Activated CD4-positive, alpha-beta T cell treated with anti-CD3 and anti-CD28 coated beads for 36 hours (primary cell): ENCODE measurements at regions of chr13 and their contacts with region 1.

Region 1: GRCh38 chr13:23966691-23967615 is 69.7 kb upstream of the C1QTNF9B start:
- DNase-seq: peak; percentile 6
- ATAC-seq: peak; percentile 79
- H3K4me3 Mint-ChIP-seq: peak overlapping the region; percentile 63
- H3K27ac Mint-ChIP-seq: peak overlapping the region; percentile 79
- H3K4me1 Mint-ChIP-seq: peaks cover 37% of the 10 kb centered on the region
- H3K27me3 Mint-ChIP-seq: no peaks in the 10 kb centered on the region

Region 2: GRCh38 chr13:23570099-23570920 is 396.6 kb before region 1 on chr13 and contains the start of gene TNFRSF19:
- CTCF ChIA-PET with region 1: no interaction called
- POLR2A ChIA-PET with region 1: no interaction called
- intact Hi-C with region 1: no loop called
- DNase-seq: no peak
- ATAC-seq: no peak
- H3K4me3 Mint-ChIP-seq: no peak within 1 kb of the TSS
- H3K27ac Mint-ChIP-seq: no peak within 1 kb of the TSS
- H3K4me1 Mint-ChIP-seq: peaks cover 14% of the 10 kb centered on the region
- H3K27me3 Mint-ChIP-seq: peaks cover 34% of the 10 kb centered on the region
- total RNA-seq, gene TNFRSF19: not detected

Region 3: DNA sequence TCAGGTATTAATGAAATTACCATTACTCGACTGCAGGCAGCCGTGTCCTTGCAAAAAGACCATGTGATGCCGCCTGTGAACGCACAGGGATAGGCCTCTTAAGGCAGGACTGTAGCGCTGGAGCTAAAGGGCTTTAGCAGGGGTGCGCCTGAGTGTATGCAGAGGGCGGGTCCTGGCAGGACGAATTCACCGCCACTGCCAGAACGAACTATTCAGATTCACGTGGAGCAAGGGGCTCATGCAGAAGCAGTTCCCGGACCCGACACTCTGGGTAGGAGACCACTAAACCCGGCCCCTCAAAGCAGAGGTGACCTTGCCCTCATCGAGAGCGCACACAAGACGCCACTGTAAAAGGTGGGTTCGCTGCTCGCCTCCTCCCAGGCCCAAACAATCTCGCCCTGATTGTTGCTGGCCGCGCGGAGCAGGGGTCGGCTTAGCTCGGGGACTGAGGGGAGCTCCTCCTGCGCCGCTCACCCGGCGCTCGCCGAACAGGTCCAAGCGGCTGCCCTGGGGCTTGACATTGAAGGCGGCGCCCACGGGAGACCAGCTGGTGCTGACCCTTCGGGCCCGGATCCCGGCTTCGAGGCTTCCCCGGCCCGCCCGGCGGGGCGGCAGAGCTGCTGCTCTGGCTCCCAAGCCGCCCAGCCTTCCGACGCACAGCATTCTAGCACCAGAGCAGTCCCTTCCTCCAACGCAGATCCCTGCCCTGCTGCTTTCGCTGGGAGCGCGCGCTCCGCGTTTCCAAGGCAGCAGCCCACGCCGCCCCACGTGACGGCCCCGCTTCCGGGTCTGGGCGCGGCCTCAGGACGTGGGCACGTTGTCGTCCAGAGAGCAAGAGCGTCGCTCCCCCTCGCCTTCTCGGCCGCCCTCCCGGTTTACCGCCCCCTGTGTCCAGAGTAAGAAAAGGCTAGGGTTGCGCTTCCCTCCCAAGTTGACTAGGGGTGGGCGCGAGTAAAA is 78.0 kb before region 1 on chr13 and contains the start of gene MIPEP:
- CTCF ChIA-PET with region 1: no interaction called
- POLR2A ChIA-PET with region 1: no interaction called
- intact Hi-C with region 1: loop called in 1 of 2 experiments (anchors 2 kb)
- DNase-seq: peak; percentile 94
- ATAC-seq: peak; percentile 90
- H3K4me3 Mint-ChIP-seq: peak within 1 kb of the TSS; percentile 79
- H3K27ac Mint-ChIP-seq: peak within 1 kb of the TSS; percentile 75
- H3K4me1 Mint-ChIP-seq: peaks cover 23% of the 10 kb centered on the region
- H3K27me3 Mint-ChIP-seq: no peaks in the 10 kb centered on the region
- total RNA-seq, gene MIPEP: 13.2 to 15.5 TPM

Region 4: GRCh38 chr13:23921451-23921888 is 45.5 kb before region 1 on chr13:
- CTCF ChIA-PET with region 1: interaction called, 6 read pairs
- POLR2A ChIA-PET with region 1: no interaction called
- intact Hi-C with region 1: loop called (anchors 2 to 5 kb)
- DNase-seq: no peak
- ATAC-seq: peak; percentile 36
- H3K4me3 Mint-ChIP-seq: no peak overlapping the region
- H3K27ac Mint-ChIP-seq: no peak overlapping the region
- H3K4me1 Mint-ChIP-seq: no peaks in the 10 kb centered on the region
- H3K27me3 Mint-ChIP-seq: peaks cover 23% of the 10 kb centered on the region

Region 5: DNA sequence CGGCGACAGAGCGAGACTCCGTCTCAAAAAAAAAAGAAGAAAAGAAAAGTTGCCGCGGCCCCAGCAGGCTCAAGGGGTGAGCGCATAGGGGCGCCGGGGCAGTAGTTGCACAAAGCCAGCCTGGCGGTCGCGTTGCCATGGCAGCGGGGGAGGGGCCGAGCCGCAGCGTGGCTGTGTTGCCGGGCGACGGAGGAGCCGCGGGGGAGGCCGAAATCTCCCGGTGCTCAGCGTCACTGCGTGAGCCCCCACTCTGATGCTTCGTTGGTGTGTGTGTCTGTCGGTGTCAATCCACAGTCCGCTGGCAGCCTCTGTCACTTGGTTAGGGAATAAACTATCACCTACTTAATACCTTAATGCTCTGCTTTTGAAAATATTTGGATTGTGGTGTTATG is 13.2 kb after region 1 on chr13:
- CTCF ChIA-PET with region 1: interaction called, 3 read pairs
- POLR2A ChIA-PET with region 1: no interaction called
- intact Hi-C with region 1: loop called in 1 of 2 experiments (anchors 1 kb)
- DNase-seq: peak; percentile 91
- ATAC-seq: peak; percentile 87
- H3K4me3 Mint-ChIP-seq: peak overlapping the region; percentile 65
- H3K27ac Mint-ChIP-seq: no peak overlapping the region
- H3K4me1 Mint-ChIP-seq: peaks cover 10% of the 10 kb centered on the region
- H3K27me3 Mint-ChIP-seq: peaks cover 16% of the 10 kb centered on the region

Region 6: GRCh38 chr13:24038405-24038804 is 71.5 kb after region 1 on chr13:
- CTCF ChIA-PET with region 1: no interaction called
- POLR2A ChIA-PET with region 1: no interaction called
- intact Hi-C with region 1: no loop called
- DNase-seq: peak; percentile 35
- ATAC-seq: no peak
- H3K4me3 Mint-ChIP-seq: no peak overlapping the region
- H3K27ac Mint-ChIP-seq: no peak overlapping the region
- H3K4me1 Mint-ChIP-seq: peaks cover 2% of the 10 kb centered on the region
- H3K27me3 Mint-ChIP-seq: peaks cover 2% of the 10 kb centered on the region

Region 7: DNA sequence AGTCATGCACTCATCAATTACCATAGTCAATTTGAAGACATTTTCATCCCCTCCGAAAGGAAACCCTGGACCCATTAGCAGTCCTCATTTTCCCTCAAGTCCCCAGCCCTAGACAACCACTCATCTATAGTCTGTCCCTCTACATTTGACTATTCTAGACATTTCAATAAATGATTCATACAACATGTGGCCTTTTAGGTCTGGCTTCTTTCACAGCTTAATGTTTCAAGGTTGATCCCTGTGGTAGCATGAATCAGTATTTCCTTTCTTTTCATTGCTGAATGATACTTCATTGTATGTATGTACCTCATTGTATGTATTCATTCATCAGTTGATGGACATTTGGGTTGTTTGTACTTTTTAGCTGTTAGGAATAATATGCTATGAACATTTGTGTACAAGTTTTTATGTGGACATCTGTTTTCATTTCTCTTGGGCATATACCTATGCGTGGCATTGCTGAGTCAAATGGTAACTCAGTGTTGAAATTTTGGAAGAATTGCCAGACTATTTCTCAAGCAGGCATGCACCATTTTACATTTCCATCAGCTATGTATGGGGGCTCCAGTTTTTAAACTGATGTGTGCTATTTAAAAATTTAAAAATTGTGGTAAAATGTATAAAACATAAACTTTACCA is 212.0 kb after region 1 on chr13:
- CTCF ChIA-PET with region 1: no interaction called
- POLR2A ChIA-PET with region 1: no interaction called
- intact Hi-C with region 1: loop called in 1 of 2 experiments (anchors 5 kb)
- DNase-seq: no peak
- ATAC-seq: peak; percentile 92
- H3K4me3 Mint-ChIP-seq: no peak overlapping the region
- H3K27ac Mint-ChIP-seq: peak overlapping the region; percentile 8
- H3K4me1 Mint-ChIP-seq: peaks cover 31% of the 10 kb centered on the region
- H3K27me3 Mint-ChIP-seq: no peaks in the 10 kb centered on the region

Region 8: GRCh38 chr13:24220086-24220703 is 253.2 kb after region 1 on chr13:
- CTCF ChIA-PET with region 1: no interaction called
- POLR2A ChIA-PET with region 1: no interaction called
- intact Hi-C with region 1: loop called in 1 of 2 experiments (anchors 2 kb)
- DNase-seq: peak; percentile 69
- ATAC-seq: peak; percentile 98
- H3K4me3 Mint-ChIP-seq: no peak overlapping the region
- H3K27ac Mint-ChIP-seq: no peak overlapping the region
- H3K4me1 Mint-ChIP-seq: peaks cover 29% of the 10 kb centered on the region
- H3K27me3 Mint-ChIP-seq: no peaks in the 10 kb centered on the region

Region 9: GRCh38 chr13:24270639-24271141 is 303.7 kb after region 1 on chr13:
- CTCF ChIA-PET with region 1: no interaction called
- POLR2A ChIA-PET with region 1: no interaction called
- intact Hi-C with region 1: loop called in 1 of 2 experiments (anchors 2 kb)
- DNase-seq: peak; percentile 80
- ATAC-seq: peak; percentile 37
- H3K4me3 Mint-ChIP-seq: peak overlapping the region; percentile 87
- H3K27ac Mint-ChIP-seq: peak overlapping the region; percentile 97
- H3K4me1 Mint-ChIP-seq: peaks cover 85% of the 10 kb centered on the region
- H3K27me3 Mint-ChIP-seq: no peaks in the 10 kb centered on the region